ENCODE measurements at regions of chr5 and their contacts with region 1.

Region 1: DNA sequence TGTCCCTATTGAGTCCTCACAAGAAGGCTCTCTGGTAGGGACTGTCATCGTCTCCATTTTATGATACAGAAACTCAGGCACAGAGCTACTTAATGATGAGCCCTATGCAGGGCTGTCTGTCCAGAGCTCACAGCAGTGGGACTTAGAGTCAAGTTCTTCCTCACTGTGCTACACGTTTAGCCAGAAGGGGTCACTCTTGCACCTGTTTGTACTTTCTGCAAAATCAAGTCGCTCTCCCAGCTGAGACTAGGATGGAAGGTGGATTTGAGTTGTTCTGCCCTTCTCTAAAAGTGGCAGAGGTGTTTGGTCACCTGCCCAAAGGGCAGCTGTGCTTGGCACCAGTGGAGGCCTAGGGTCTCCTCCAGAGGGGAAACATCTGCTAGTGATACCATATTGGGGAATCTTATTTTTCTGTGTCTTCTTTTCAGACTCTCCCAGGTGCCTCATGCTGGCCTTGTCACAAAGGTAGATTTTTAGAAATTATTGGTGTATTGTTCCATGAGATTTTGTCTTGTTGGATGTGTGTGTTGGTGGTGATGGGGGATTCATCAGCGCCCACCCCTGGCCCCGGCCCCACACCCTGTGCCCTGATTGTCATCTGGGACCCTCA is 104.2 kb downstream of the PPARGC1B start:
- DNase-seq: peak; percentile 88
- H3K4me3 ChIP-seq: no peak overlapping the region
- H3K27ac ChIP-seq: peak overlapping the region; percentile 28
- H3K4me1 ChIP-seq: peaks cover 21% of the 10 kb centered on the region
- H3K27me3 ChIP-seq: no peaks in the 10 kb centered on the region
- CTCF ChIP-seq: peak; percentile 88

Region 2: DNA sequence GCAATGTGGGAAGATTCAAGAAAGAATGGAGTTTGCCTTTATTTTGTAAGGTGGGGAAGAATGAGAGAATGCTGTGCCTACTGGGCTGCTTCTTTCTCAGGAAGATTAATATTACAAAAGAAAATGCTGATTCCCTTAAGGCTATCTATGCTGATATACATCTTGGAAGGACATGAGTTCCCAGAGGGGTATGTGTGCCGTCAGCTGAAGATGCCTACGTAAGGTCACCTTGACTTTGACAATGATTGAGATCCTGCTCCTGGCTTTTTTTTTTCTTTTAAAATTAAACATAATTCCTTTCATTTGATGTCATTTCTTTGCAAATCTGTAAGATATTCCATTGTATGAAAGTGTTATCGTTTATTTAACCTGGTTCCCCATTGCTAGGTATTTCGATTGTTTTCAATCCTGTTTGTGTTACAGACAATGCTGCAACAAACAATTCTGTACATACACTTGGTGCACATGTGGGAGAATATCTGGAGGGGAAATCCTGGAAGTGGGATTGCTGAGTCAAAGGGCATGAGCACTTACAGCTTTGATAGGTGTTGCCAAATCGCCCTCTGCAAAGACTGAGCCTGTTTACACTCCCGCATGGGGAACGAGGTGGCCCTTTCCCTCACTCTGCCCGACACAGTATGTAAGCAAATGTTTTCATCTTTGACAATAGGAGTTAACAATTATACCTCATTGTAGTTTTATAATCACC is 43.8 kb after region 1 on chr5:
- CTCF ChIA-PET with region 1: no interaction called
- POLR2A ChIA-PET with region 1: no interaction called
- intact Hi-C with region 1: no loop called
- DNase-seq: no peak
- H3K4me3 ChIP-seq: no peak overlapping the region
- H3K27ac ChIP-seq: no peak overlapping the region
- H3K4me1 ChIP-seq: no peaks in the 10 kb centered on the region
- H3K27me3 ChIP-seq: no peaks in the 10 kb centered on the region
- CTCF ChIP-seq: no peak

Region 3: DNA sequence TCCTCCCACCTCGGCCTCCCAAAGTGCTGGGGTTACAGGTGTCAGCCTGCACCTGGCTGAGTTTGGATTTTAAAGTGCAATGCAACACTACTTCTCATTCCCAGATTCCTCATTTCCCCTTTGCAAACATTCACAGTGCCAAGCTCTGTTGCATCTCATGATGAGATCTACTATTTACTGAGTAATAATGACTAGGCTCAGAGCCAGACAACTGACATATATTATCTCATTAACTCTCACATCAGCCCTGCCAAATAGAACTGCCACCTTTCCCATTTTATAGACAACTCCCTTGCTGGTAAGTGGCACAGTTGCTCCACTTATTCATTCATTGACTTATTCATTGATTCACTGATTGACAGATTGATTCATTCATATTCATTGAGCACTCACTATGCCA is 103.3 kb after region 1 on chr5:
- CTCF ChIA-PET with region 1: interaction called, 7 read pairs
- POLR2A ChIA-PET with region 1: no interaction called
- intact Hi-C with region 1: loop called (anchors 2 kb)
- DNase-seq: peak; percentile 94
- H3K4me3 ChIP-seq: no peak overlapping the region
- H3K27ac ChIP-seq: peak overlapping the region; percentile 98
- H3K4me1 ChIP-seq: peaks cover 78% of the 10 kb centered on the region
- H3K27me3 ChIP-seq: no peaks in the 10 kb centered on the region
- CTCF ChIP-seq: no peak

Region 4: DNA sequence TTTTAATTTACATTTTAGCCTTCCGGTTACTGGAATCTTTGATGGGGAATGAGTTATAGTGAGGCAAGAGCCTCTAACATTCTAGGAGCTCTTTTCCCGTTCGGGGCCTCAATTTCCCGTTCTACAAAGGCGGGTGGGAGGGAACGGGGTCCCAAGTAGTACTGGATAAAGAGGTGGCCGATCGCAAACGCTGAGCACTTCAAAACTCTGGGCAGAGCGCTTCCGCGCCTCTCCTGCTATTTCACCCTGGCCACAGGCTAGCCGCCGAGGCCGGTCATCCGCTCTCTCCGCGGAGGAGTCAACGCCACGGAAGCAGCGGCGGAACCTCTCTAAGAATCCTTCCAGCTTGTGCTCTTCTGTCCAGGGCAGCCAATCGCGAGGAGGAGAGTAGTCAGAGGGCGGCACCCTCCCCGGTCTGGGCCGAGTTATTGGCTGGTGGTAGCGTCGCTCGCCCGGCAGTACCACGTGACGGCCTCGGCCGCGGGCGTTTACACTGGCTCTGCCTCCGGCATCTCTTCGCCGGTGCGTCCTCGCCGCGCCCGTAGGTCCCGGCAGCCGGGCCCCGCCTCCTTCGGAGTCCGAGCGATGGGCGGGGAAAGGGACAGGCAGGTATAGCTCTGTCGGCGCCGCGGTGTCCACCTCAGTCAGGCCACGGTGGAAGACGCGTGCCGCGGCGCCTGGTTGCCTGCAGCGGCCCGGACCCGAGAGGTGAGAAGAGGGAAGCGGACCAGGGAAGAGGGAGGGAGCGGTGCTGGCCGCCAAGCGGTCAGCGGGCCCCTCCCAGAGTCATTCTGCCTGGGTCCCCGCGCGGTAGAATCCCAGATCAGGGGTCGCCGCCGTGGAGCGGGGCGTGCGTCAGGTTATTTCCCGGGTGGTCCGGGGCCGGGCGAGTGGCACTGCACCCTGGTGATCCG is 126.2 kb after region 1 on chr5 and contains the start of gene SLC26A2:
- CTCF ChIA-PET with region 1: interaction called, 17 read pairs
- POLR2A ChIA-PET with region 1: no interaction called
- intact Hi-C with region 1: no loop called
- DNase-seq: peak; percentile 99
- H3K4me3 ChIP-seq: peak within 1 kb of the TSS; percentile 85
- H3K27ac ChIP-seq: peak within 1 kb of the TSS; percentile 92
- H3K4me1 ChIP-seq: peaks cover 28% of the 10 kb centered on the region
- H3K27me3 ChIP-seq: no peaks in the 10 kb centered on the region
- CTCF ChIP-seq: no peak
- total RNA-seq, gene SLC26A2: 83.0 and 96.6 TPM in 2 replicates

Region 5: DNA sequence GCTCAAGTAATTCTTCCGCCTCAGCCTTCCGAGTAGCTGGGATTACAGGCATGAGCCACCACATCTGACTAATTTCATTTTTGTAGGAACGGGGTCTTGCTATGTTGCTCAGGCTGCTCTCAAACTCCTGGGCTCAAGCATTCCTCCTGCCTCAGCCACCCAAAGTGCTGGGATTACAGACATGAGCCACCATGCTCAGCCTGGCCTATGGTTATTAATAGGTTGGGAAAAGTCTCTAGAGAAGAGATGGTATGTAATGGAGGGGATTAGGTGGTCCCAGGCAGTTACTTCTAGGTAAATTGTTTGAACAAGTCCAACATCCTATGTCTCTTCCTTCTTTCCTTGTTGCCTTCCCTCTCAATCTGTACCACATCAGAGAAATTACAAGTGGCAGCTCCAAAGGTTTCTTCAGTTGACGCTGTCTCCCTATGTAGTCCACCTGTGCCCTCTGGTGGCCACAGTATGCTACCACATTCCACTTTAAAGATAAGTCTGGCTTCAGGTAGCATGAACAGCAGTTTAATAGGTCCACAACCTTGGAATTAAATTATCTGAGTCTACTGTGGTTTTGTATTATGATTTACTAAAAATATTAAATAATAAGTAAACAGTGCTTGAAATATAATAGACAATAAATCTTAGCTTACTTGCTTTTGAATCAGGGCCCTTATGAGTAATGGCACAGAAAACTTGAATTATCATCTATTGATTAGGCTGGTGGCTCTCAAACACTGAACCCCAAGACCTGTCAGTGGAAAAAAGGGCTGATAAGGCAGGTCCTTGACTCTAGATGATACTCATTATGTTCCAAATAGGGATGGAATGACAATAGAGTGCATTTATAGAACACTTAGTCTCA is 156.4 kb after region 1 on chr5:
- CTCF ChIA-PET with region 1: interaction called, 46 read pairs
- POLR2A ChIA-PET with region 1: no interaction called
- intact Hi-C with region 1: loop called (anchors 1 kb)
- DNase-seq: peak; percentile 90
- H3K4me3 ChIP-seq: no peak overlapping the region
- H3K27ac ChIP-seq: peak overlapping the region; percentile 17
- H3K4me1 ChIP-seq: peaks cover 32% of the 10 kb centered on the region
- H3K27me3 ChIP-seq: no peaks in the 10 kb centered on the region
- CTCF ChIP-seq: peak; percentile 93

Region 6: DNA sequence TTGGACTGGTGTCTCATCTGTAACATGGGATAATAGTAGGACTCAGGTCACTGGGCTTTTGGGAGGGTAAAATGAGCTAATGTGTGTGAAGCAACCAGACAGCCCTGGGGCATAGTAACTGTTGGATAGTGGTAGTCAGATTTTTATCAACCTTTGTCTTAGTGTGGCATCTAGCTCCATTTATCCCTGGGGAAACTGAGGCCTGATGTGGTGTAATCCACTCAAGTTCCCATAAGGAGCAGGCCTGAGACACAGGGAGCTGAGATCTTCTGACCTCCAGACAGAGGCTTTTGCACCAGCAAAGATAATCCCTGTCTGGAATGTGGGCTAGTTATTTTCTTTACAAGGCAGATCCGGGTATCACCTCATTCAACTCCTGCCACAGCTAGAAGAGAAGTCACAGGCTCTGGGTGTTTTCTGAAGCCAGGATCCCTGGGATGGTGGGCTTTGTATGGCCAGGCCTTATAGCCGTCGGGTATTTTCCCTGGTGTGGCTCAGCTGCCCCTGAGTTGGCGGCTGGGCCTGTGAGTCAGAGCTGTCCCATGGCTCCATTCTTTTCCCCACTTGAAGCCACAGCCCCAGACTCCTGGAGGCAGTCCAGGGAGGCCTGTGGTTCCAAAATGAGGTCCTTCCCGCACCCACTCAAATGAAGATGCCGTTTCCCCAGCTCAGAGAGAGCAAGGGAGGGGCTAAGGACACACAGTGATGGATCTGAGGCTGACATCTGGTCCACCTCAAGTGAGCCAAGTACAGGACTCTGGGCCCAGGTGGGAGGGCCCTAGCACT is 278.1 kb after region 1 on chr5:
- CTCF ChIA-PET with region 1: no interaction called
- POLR2A ChIA-PET with region 1: no interaction called
- intact Hi-C with region 1: loop called (anchors 10 kb)
- DNase-seq: peak; percentile 40
- H3K4me3 ChIP-seq: no peak overlapping the region
- H3K27ac ChIP-seq: no peak overlapping the region
- H3K4me1 ChIP-seq: peaks cover 11% of the 10 kb centered on the region
- H3K27me3 ChIP-seq: no peaks in the 10 kb centered on the region
- CTCF ChIP-seq: no peak

Region 7: DNA sequence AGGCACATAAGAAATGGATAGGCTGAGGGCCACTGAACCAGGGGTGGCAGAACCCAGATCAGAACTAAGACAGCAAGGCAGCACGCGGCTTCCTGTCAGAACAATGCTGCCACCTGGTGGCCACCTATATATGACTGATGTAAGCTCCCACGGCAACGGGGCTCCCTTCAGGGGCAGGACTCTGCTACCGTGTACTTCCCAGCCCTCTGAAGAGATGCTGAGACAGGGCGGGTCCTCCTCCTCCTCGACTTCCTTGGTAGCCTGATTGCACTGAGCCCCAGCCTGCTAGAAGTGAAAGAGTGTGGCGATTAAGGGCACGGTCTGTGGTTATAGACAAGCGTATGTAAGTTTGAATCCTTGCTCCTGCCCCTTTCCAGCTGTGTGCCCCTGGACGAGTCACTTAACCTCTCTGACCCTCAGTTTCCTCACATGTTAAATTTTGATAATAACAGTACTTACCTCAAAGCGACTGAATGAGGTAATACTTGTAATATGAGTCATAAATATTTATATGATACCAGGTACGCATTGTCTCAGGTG is 601.9 kb after region 1 on chr5:
- CTCF ChIA-PET with region 1: interaction called, 3 read pairs
- POLR2A ChIA-PET with region 1: no interaction called
- intact Hi-C with region 1: loop called (anchors 2 kb)
- DNase-seq: peak; percentile 91
- H3K4me3 ChIP-seq: no peak overlapping the region
- H3K27ac ChIP-seq: no peak overlapping the region
- H3K4me1 ChIP-seq: no peaks in the 10 kb centered on the region
- H3K27me3 ChIP-seq: no peaks in the 10 kb centered on the region
- CTCF ChIP-seq: peak; percentile 86

Measured in A673 (cell line).